Transverse colon (tissue), 4 donors: ENCODE measurements at regions of chr3 and their contacts with region 1.

Region 1: DNA sequence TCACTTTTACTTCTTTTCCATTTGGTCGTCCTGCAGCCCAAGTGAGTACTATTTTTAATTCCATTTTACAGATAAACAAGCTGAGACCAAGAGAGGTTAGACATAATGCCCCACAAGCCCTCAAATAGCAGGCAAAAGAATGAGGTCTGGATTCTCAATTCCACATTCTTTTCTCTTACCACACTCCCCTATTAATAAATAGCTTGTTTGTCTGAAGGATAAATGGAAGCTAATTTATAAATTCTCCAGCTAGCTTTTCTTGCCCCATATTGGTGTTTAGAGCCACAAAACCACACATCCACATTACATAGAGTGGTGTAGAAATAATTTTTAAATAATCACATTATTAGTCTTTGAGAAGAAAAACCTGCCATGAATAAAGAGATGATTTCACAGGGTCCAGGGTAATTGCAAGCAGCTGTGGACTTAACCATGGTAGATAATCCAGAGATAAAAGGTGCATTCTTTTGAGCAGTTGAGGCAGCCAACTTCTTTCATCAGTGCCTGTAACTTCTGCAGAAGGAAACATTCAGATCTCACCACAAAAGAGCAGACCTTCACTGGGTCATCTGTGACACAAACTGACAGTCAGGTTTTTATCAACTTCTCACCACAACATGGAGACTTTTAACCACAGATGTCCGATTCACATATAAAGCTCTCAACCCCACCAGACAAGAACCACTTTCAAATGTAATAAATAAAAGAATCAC is 313.4 kb upstream of the STT3B start:
- DNase-seq: no peak
- H3K4me3 ChIP-seq: no peak overlapping the region
- H3K27ac ChIP-seq: no peak overlapping the region
- H3K4me1 ChIP-seq: peaks cover 0 to 3% (median 0%) of the 10 kb centered on the region in 4 donors
- H3K27me3 ChIP-seq: no peaks in the 10 kb centered on the region
- CTCF ChIP-seq: no peak
- EP300 ChIP-seq: no peak
- POLR2A ChIP-seq: no peak

Region 2: GRCh38 chr3:31456373-31456772 is 237.1 kb after region 1 on chr3:
- in situ Hi-C with region 1: loop called in 1 of 4 experiments (anchors 10 kb)
- intact Hi-C with region 1: no loop called
- DNase-seq: no peak
- H3K4me3 ChIP-seq: no peak overlapping the region
- H3K27ac ChIP-seq: no peak overlapping the region
- H3K4me1 ChIP-seq: peaks cover 0 to 4% (median 2%) of the 10 kb centered on the region in 4 donors
- H3K27me3 ChIP-seq: no peaks in the 10 kb centered on the region
- CTCF ChIP-seq: no peak
- EP300 ChIP-seq: no peak
- POLR2A ChIP-seq: no peak